A549 (cell line): ENCODE measurements at regions of chr15 and their contacts with region 1.

Region 1: DNA sequence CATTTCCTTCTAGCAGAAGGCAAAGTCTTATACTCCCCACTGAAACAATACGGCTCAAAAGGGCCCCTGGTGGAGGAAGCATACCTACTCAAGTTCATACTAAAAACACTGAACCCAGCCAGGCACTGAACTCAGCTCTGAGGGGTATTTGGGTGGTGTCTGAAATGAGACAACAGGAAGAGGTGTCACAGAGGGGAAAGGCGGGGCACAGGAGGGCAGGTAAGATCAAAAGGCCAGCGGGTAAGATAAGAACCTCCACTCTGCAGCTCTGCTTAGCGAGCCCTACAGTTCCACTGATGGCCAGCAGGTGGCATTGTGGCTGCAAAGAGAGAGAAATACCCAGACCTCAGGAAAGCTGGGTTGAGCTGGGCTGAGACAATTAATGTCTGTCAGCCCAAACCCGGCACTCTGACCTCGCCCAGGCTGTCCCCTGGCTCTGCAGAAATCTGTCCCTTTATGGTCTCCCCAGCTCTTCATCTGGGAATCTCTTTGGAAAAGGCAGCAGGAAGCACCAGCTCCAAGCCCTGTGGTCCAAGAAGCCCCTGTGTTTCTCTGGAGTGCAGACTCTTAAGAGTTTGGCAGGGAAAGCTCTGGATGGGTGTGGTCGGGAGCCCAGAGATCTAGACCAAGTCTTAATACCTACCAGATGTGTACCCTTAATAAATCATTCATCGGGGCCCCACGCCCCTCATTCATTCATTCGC is 8.4 kb downstream of the MFGE8 start:
- DNase-seq: peak; percentile 82 to 89
- ATAC-seq: peak; percentile 64 to 88
- H3K4me3 ChIP-seq: no peak overlapping the region
- H3K27ac ChIP-seq: peak overlapping the region; percentile 49 to 71
- H3K4me1 ChIP-seq: peaks cover 33% of the 10 kb centered on the region
- CTCF ChIP-seq: peak; percentile 99
- EP300 ChIP-seq: no peak
- POLR2A ChIP-seq: no peak
- RAD21 ChIP-seq: peak; percentile 97

Region 2: GRCh38 chr15:88657326-88658069 is 247.3 kb before region 1 on chr15:
- CTCF ChIA-PET with region 1: interaction called, 15 read pairs
- POLR2A ChIA-PET with region 1: no interaction called
- DNase-seq: peak; percentile 62 to 78
- ATAC-seq: peak; percentile 75 to 88
- H3K4me3 ChIP-seq: no peak overlapping the region
- H3K27ac ChIP-seq: no peak overlapping the region
- H3K4me1 ChIP-seq: no peaks in the 10 kb centered on the region
- CTCF ChIP-seq: peak; percentile 93
- EP300 ChIP-seq: no peak
- POLR2A ChIP-seq: no peak
- RAD21 ChIP-seq: peak; percentile 94 to 97

Region 3: DNA sequence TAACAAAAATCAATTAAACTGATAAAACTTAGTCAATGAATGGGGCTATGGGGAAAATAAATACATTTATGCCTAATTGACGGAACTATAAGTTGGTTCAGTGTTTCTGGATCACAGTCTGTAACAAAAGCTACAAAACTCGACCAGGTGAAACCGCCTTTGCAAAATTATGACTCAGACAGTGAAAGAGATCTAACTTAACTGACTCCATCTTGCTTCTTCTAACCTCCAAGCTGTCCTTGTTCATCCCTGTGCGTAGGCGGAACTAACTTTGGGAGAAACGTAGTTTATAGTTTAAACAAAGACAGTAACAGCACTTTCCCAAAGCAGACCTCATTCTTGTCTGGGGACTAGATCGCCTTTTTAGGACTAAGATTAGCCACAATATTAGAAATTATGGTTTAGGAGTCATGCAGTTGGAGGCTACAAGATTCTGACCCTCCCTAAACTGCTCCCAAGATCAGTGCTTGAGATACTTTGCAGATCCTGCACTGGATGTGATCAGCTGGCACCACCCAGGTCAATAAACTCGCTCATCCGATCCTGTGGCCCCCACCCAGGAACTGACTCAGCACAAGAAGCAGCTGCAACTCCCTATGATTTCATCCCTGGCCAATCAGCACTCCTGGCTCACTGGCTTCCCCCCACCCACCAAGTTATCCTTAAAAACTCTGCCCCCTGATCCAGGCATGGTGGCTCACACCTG is 15.6 kb after region 1 on chr15:
- CTCF ChIA-PET with region 1: interaction called, 138 read pairs
- POLR2A ChIA-PET with region 1: no interaction called
- DNase-seq: peak in 1 of 2 experiments; percentile 70
- ATAC-seq: peak in 1 of 2 experiments; percentile 60; a peak in 3 of 6 replicates
- H3K4me3 ChIP-seq: no peak overlapping the region
- H3K27ac ChIP-seq: peak overlapping the region; percentile 55 to 78
- H3K4me1 ChIP-seq: peaks cover 34% of the 10 kb centered on the region
- CTCF ChIP-seq: no peak
- EP300 ChIP-seq: no peak
- POLR2A ChIP-seq: no peak
- RAD21 ChIP-seq: no peak

Region 4: DNA sequence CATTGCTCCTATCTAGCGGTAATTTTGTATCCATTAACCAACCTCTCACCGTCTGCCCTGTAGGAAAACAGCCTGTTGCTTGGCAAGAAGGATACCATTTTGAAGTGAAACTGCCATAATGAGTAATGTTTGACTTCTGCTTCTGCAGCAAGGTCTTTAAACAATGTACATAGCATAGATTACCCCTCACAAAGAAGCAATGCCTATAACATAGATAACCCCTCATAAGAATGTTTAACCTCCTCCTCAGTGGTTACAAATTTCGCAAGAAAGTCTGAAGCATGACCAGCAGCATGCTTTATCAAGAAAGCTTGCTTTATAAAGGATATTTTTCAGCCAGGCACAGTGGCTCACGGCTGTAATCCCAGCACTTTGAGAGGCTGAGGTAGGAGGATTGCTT is 69.6 kb after region 1 on chr15:
- CTCF ChIA-PET with region 1: interaction called, 18 read pairs
- POLR2A ChIA-PET with region 1: no interaction called
- DNase-seq: no peak
- ATAC-seq: peak in 1 of 2 experiments; percentile 65; a peak in 3 of 6 replicates
- H3K4me3 ChIP-seq: no peak overlapping the region
- H3K27ac ChIP-seq: peak overlapping the region in 1 of 2 experiments; percentile 74; a peak in 4 of 6 replicates
- H3K4me1 ChIP-seq: peaks cover 23% of the 10 kb centered on the region; the same call in 2 of the 3 replicates
- CTCF ChIP-seq: no peak
- EP300 ChIP-seq: no peak
- POLR2A ChIP-seq: no peak
- RAD21 ChIP-seq: 0 out of 5 replicates have a peak, but pooled peaks of 1 of the 2 experiments have one; percentile 5

Region 5: DNA sequence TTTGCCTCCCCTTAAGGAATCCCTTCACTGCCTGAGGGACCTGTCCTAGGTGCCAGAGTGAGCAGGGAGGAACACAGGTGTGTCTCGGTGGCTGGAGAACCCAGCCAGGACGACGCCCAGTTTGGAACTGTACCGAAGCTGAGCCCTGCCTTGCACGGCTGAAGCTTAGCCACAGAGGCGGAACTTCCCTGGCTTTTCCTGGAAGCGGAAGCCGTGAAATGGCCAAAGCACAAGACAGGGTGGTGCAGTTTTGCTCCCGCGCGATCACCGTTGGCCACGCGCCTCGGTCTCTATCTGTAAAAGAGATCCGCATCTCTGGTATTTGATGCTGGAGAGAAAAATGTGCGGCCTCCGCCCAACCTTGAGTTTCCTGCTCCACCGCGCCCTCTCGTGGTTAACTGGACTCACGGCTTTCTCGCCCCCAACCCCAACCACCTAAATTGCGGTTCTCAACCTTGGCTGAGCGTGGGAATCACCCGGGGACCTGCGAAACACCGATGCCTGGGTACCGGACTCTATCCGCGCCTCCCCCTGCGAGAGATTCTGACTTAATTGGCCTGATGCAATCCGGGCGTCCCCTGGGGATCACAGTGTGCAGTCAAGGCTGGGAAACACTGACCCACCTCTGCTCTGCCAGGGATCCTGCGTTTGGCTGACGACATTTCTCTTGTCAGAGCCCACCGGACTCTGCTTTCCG is 112.7 kb after region 1 on chr15:
- CTCF ChIA-PET with region 1: interaction called, 851 read pairs
- POLR2A ChIA-PET with region 1: no interaction called
- DNase-seq: peak; percentile 82 to 84
- ATAC-seq: peak; percentile 90 to 95
- H3K4me3 ChIP-seq: peak overlapping the region; percentile 37
- H3K27ac ChIP-seq: peak overlapping the region; percentile 68 to 79
- H3K4me1 ChIP-seq: peaks cover 17% of the 10 kb centered on the region
- CTCF ChIP-seq: peak; percentile 97
- EP300 ChIP-seq: no peak
- POLR2A ChIP-seq: no peak
- RAD21 ChIP-seq: peak; percentile 93 to 95

Region 6: GRCh38 chr15:89129123-89129815 is 224.5 kb after region 1 on chr15:
- CTCF ChIA-PET with region 1: interaction called, 12 read pairs
- POLR2A ChIA-PET with region 1: interaction called, 4 read pairs
- DNase-seq: peak; percentile 63 to 68
- ATAC-seq: peak; percentile 60 to 79; a peak in 3 of 6 replicates
- H3K4me3 ChIP-seq: no peak overlapping the region
- H3K27ac ChIP-seq: peak overlapping the region; percentile 69 to 74
- H3K4me1 ChIP-seq: peaks cover 57% of the 10 kb centered on the region
- CTCF ChIP-seq: peak; percentile 95
- EP300 ChIP-seq: no peak
- POLR2A ChIP-seq: no peak
- RAD21 ChIP-seq: peak; percentile 84 to 86